Activated CD4-positive, alpha-beta memory T cell treated with anti-CD3 and anti-CD28 coated beads for 36 hours (primary cell): ENCODE measurements at regions of chr1 and their contacts with region 1.

Region 1: DNA sequence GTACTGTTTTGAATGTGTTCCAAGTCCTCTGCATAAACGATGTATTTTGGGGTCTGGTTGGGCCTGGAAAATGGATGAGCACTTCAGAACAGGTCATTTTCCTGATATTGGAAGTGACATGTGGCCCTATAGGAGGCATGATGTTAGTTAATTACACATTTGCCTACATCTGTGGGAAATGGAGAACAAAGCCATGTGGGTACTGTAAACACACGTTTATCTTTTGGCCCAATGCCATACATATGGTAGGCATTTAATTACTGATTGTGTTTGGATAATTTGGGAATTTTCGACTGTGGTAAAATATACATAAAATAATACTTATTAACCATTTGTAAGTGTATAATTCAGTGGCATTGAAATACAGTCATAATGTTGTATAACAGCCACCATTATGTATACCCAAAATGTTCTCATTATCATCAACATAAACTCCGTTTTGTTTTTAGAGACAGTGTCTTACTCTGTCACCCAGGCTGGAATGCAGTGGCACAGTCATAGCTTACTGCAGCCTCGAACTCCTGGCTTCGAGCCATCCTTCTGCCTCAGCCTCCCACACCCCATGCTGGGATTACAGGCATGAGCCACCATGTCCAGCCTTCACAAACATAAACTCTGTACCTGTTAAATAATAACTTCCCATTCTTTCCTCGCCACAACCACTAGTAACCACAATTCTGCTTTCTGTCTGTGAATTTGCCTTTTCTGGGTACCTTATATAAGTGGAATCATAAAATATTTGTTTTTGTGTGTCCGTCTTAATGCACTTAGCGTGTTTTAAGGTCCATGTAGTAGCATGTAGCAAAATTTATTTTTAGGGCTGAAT is 11.9 kb upstream of the RNPEP start:
- DNase-seq: no peak
- H3K4me3 Mint-ChIP-seq: no peak overlapping the region
- H3K27ac Mint-ChIP-seq: no peak overlapping the region
- H3K4me1 Mint-ChIP-seq: no peaks in the 10 kb centered on the region
- H3K27me3 Mint-ChIP-seq: no peaks in the 10 kb centered on the region

Region 2: DNA sequence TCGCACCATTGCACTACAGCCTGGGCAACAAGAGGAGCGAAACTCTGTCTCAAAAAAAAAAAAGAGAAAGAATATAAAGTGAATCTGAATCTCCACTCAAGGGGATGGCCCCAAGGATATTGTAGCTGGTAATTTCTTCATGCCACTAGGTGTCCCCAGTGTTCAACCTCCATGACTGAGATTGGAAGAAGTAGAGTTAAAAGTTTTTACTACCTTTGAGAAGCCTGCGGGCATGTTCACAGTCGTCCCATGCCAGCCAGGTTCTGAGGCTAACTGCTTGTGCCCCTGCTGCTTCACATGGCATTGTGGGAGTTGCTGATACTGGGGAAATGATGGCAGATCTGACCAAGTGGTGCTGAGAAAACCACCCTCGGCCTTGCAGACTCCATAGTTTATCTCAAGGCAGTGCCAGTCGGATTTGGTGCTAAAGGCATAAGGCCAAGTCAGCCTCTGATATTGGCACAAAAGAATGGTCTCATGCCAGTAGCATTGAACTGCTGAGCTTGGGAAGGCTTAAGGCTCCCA is 92.6 kb before region 1 on chr1:
- CTCF ChIA-PET with region 1: interaction called, 27 read pairs
- POLR2A ChIA-PET with region 1: no interaction called
- intact Hi-C with region 1: no loop called
- DNase-seq: peak; percentile 17
- H3K4me3 Mint-ChIP-seq: no peak overlapping the region
- H3K27ac Mint-ChIP-seq: no peak overlapping the region
- H3K4me1 Mint-ChIP-seq: no peaks in the 10 kb centered on the region
- H3K27me3 Mint-ChIP-seq: no peaks in the 10 kb centered on the region